Posterior vena cava (tissue), 2 donors: ENCODE measurements at regions of chr19 and their contacts with region 1.

Region 1: DNA sequence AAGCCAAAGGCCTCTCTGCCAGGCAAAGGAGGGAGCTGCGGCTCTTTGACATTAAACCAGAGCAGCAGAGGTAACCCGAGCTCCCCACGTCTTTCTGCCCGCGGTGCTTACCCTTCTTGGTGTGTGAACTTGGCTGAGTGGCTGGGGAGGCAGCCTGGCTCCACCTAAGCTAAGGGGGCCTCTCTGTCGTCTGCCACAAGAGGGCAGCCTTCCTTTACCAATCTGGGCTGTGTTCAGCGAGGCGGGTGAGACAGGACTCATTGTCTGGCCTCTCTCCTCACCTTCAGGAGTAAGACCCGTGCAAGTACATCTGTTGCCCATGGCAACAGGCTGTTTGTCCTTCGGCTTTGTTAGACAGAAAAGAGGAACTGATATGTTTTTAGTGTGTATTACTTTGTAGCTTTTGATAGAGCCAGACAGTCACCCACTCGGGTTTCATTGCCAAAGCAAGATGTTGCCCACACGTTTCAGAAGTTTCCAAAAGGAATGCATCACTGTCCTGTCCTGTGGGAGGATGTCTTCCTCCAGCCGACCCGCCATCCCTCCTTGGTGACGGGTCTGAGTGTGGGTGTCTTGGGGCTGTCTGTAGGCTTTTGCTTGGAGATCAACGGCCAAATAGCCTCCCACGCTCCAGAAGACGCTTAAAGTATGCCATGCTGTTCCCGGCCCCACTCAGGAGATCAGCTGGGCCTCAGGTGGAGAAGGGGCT is 4.6 kb downstream of the POP4 start:
- DNase-seq: peak; percentile 95

Region 2: DNA sequence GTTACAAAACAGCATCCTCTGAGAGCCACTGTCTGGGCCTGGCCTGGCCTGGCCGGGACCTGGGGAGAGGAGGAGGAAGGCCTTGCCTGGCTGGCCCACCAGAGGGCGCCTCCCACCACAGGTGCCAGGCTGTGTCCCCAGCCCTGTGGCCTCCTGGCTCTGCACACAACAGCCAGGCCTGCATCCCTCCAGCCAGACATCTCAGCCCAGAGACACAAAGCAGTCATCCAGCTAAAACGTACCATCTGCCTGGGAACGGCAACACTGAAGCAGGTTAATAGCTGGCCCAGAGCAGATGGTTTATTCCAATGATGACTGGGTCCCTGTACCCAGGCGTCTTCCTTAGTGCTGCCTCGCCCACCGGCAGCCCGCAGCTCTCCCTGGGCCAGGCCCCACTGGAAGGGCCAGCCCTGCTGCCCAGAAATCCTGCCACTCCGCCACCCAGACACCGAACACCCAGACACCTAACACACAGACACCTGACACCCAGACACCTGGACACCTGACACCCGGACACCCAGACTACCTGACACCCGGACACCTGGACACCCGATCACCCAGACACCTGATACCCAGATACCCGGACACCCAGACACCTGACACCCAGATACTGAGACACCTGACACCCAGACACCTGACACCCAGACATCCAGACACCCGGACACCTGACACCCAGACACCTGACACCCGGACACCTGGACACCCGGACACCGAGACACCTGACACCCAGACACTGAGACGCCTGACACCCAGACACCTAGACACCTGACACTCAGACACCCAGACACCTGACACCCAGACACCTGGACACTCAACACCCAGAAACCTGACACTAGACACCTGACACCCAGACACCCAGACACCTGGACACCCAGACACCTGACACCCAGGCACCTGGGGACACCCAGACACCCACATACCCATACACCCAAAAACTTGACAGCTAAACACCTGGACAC is 84.2 kb after region 1 on chr19:
- intact Hi-C with region 1: loop called in 1 of 2 experiments (anchors 5 kb)
- DNase-seq: peak; percentile 92

Region 3: GRCh38 chr19:29714953-29715700 is 104.4 kb after region 1 on chr19 and contains the start of gene C19orf12:
- intact Hi-C with region 1: loop called (anchors 2 to 5 kb)
- DNase-seq: peak; percentile 88
- total RNA-seq, gene C19orf12: 26.7 to 29.8 TPM